Endothelial cell of umbilical vein (primary cell): ENCODE measurements at regions of chr2 and their contacts with region 1.

Region 1: GRCh38 chr2:27281855-27282559 is at the start of gene TRIM54:
- DNase-seq: no peak
- H3K4me3 ChIP-seq: no peak within 1 kb of the TSS
- H3K27ac ChIP-seq: no peak within 1 kb of the TSS
- H3K4me1 ChIP-seq: peaks cover 6% of the 10 kb centered on the region
- H3K27me3 ChIP-seq: no peaks in the 10 kb centered on the region
- CTCF ChIP-seq: no peak
- POLR2A ChIP-seq: no peak
- total RNA-seq, gene TRIM54: 0.42 and 0.51 TPM in 2 replicates

Region 2: DNA sequence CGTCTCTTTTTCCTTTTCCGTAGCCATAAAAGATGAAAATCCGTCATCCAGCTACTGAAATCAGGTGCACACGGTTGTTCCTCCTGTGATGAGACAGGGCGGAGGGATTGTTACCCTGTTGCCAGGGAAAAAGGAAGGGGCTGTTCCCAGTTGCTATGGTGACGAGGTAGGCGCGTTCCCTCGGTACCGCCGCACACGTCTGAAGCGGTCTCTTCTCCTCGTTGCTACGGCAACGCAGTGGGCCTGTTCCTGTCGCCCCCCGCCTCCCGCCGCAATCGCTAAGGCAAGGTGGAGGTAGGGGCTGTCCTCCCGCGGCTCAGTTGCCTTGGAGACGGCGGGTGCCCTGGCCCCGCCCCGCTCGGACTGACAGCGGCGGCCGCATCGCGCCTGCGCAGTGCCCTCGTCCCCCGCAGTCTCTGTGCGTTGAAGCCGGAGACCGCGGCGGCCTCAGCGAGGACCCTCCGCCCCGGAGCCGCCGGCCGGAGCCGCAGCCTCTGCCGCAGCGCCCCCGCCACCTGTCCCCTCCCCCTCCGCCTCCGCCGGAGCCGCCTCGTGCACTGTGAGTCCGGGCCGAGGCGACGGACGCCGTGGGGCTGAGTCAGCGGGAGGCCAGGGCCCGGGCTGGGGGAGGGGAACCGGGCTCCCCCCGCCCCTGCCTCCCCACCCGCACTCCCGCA is 311.6 kb before region 1 on chr2 and contains the start of gene MAPRE3:
- CTCF ChIA-PET with region 1: no interaction called
- POLR2A ChIA-PET with region 1: no interaction called
- dilution Hi-C with region 1: no loop called
- intact Hi-C with region 1: loop called (anchors 10 kb)
- DNase-seq: peak; percentile 85
- H3K4me3 ChIP-seq: peak within 1 kb of the TSS in 2 of 3 experiments; percentile 29 to 75
- H3K27ac ChIP-seq: no peak within 1 kb of the TSS
- H3K4me1 ChIP-seq: peaks cover 2% of the 10 kb centered on the region
- H3K27me3 ChIP-seq: peaks cover 20 to 23% of the 10 kb centered on the region in 2 experiments
- CTCF ChIP-seq: no peak
- POLR2A ChIP-seq: no peak
- total RNA-seq, gene MAPRE3: 5.0 and 6.1 TPM in 2 replicates

Region 3: GRCh38 chr2:27067385-27067784 is 214.6 kb before region 1 on chr2:
- CTCF ChIA-PET with region 1: no interaction called
- POLR2A ChIA-PET with region 1: no interaction called
- dilution Hi-C with region 1: no loop called
- intact Hi-C with region 1: no loop called
- DNase-seq: no peak
- H3K4me3 ChIP-seq: no peak overlapping the region
- H3K27ac ChIP-seq: no peak overlapping the region
- H3K4me1 ChIP-seq: peaks cover 33% of the 10 kb centered on the region
- H3K27me3 ChIP-seq: no peaks in the 10 kb centered on the region
- CTCF ChIP-seq: no peak
- POLR2A ChIP-seq: no peak

Region 4: DNA sequence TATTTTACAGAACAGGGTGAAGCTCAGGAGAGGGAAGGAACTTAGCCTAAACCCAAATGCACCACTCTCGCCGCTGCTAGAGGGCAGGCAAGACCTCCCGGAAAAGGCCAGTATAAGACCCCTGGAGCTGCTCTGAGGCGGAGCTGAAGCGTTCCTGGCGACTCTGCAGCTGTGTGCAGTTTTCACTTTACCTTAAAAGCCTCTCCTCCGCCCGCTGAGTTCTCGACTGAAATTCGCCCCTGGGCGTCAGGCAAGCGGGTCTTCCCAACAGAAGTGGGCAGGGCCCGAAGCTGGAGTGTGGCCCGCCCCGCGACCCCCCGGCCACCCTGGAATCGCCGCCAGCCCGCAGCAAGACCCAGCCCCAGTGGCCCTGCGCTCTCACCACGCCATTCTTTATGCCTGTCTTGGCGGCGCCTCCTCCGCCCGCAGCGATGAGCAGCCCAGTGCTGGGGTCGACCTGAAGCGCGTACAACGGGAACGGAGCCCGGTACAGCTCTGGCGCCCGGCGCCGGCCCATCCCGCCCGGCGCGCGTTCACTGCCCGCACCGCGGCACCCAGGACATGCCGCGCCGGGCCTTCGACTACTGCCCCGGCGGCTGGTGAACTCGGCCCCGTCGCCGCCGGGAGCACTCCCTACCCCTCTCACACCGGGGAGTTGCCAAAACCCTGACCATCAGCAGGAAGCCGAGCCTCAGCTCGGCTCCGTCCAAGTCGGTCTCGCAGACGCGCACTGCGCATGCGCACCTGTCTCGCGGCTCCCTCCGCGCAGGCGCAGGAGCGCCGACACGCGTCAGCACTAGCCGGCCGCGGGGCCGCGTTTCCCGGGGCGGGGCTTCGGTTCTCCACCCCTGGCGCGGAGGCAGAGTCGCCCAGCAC is 147.9 kb before region 1 on chr2 and contains the start of gene PREB:
- CTCF ChIA-PET with region 1: interaction called, 14 read pairs
- POLR2A ChIA-PET with region 1: no interaction called
- dilution Hi-C with region 1: no loop called
- intact Hi-C with region 1: no loop called
- DNase-seq: peak; percentile 97
- H3K4me3 ChIP-seq: peak within 1 kb of the TSS; percentile 78 to 97 (median 84)
- H3K27ac ChIP-seq: peak within 1 kb of the TSS; percentile 72
- H3K4me1 ChIP-seq: peaks cover 10% of the 10 kb centered on the region
- H3K27me3 ChIP-seq: no peaks in the 10 kb centered on the region
- CTCF ChIP-seq: peak; percentile 13 to 48
- POLR2A ChIP-seq: peak; percentile 90
- total RNA-seq, gene PREB: 45.6 and 47.2 TPM in 2 replicates

Region 5: DNA sequence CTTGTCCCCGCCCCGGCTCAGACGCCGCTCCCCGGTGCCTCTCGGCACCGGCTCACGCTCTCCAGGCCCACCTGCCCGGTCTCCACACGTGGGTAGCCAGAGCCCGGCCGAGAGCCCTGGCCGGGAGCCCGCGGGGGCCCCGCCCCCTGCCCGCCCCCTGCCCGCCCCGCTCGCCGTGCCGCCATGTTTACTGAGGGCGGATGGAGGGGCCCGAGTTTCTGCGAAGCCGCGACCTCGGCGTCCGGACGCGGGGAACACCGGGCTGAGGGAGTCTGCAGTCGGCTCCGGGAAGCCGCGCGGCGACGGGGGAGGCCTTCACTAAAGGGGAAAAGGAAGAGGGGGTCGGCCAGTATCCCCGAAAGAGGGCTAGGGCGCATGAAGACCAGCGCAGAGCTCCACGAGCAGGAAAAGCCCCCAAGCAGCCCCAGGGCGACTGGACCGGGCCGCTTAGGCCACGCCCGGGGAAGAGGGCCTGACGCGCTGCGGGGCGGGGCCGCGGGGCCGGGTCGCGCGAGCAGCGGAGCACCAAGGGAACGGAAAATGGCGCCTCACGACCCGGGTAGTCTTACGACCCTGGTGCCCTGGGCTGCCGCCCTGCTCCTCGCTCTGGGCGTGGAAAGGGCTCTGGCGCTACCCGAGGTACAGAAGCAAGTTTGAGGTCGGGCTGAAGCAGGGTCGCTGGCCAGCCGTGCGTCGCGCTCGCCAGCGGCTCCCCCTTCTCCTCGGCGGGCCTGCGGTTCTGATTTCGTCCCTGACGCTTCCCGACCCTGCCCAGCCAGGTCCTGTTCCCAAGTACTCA is 70.0 kb before region 1 on chr2 and contains the starts of genes ATRAID and SLC5A6:
- CTCF ChIA-PET with region 1: no interaction called
- POLR2A ChIA-PET with region 1: no interaction called
- dilution Hi-C with region 1: no loop called
- intact Hi-C with region 1: loop called (anchors 5 kb)
- DNase-seq: peak; percentile 92
- H3K4me3 ChIP-seq: peak within 1 kb of the TSS; percentile 68 to 91 (median 88)
- H3K27ac ChIP-seq: peak within 1 kb of the TSS; percentile 89
- H3K4me1 ChIP-seq: peaks cover 17% of the 10 kb centered on the region
- H3K27me3 ChIP-seq: no peaks in the 10 kb centered on the region
- CTCF ChIP-seq: no peak
- POLR2A ChIP-seq: peak; percentile 98
- total RNA-seq, gene ATRAID: 84.3 and 86.6 TPM in 2 replicates
- total RNA-seq, gene SLC5A6: 42.7 and 52.0 TPM in 2 replicates

Region 6: DNA sequence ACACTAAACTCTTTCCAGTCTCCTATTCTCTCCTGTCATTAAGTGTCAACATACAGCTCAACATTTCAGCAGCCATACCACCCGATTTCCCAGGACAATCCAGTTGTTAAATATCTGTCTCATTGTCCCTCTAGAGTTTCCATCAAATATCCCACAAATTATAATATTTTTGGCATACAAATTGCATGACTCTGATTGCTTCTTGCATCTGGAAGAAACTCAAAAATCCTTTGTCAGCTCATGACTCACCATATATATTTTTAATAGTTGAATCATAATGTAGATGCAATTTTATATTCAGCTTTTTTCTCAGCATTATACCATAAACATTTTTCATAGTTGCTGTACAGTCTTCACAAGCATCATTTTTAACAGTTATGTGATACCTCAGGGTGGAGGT is 26.3 kb before region 1 on chr2:
- CTCF ChIA-PET with region 1: interaction called, 81 read pairs
- POLR2A ChIA-PET with region 1: no interaction called
- dilution Hi-C with region 1: no loop called
- intact Hi-C with region 1: loop called (anchors 1 kb)
- DNase-seq: peak; percentile 49
- H3K4me3 ChIP-seq: no peak overlapping the region
- H3K27ac ChIP-seq: no peak overlapping the region
- H3K4me1 ChIP-seq: peaks cover 11% of the 10 kb centered on the region
- H3K27me3 ChIP-seq: peaks cover 0 to 4% of the 10 kb centered on the region in 2 experiments
- CTCF ChIP-seq: no peak
- POLR2A ChIP-seq: no peak

Region 7: GRCh38 chr2:27303093-27304025 is 21.4 kb after region 1 on chr2:
- CTCF ChIA-PET with region 1: interaction called, 115 read pairs
- POLR2A ChIA-PET with region 1: no interaction called
- dilution Hi-C with region 1: no loop called
- intact Hi-C with region 1: loop called (anchors 1 kb)
- DNase-seq: peak; percentile 69
- H3K4me3 ChIP-seq: no peak overlapping the region
- H3K27ac ChIP-seq: no peak overlapping the region
- H3K4me1 ChIP-seq: peaks cover 8% of the 10 kb centered on the region
- H3K27me3 ChIP-seq: peaks cover 23 to 36% of the 10 kb centered on the region in 2 experiments
- CTCF ChIP-seq: peak; percentile 66
- POLR2A ChIP-seq: no peak